Motor neuron (in vitro differentiated cells): ENCODE measurements at regions of chr18 and their contacts with region 1.

Region 1: DNA sequence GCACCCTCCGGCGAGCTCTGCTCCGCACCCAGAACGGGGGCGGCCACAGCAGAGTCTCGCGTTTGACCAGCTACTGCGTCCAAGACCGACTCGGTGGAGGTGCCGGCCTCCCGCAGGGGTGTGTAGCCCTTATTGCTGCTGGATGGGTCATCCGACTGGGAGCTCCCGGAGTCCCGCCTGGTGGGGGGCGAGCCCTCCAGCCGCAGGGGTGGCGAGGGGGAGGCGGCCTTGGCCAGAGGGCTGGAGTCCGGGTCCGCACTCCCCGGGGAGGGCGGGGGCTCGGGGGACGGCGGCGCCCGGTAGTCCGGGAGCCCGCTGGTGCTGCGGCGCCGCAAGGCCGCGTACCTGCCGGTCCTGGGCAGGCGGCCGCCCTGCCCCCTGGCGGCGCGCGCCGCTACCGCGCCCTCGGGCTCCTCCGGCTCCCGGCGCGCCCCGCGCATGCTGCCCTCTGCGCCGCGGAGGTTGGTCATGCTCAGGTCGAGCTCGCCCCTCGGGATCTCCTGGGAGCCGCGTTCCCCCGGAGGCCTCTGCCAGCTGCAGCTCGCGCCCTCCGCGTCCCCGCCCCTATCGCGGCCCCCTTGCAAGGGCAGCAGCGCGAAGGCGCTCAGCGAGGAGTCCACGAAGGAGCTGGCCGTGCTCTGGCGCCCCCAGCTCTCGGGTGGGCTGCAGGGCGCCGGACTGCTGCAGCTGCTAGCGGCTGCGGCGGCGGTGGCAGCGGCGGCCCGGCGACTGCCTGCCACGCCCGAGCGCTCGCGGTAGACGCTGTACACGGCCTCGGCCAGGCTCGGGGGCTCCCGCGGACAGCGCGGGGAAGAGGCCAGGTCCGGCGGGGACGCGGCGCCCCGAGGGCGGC is 4.8 kb downstream of the TMEM200C start:
- ATAC-seq: peak in 7 of 8 experiments; percentile 5 to 64 (median 34)
- H3K4me3 ChIP-seq: peak overlapping the region in 2 of 5 donors; percentile 11 to 20
- H3K27ac ChIP-seq: no peak overlapping the region
- H3K4me1 ChIP-seq: peaks cover 14 to 15% of the 10 kb centered on the region in 2 donors

Region 2: GRCh38 chr18:5527603-5528002 is 363.0 kb before region 1 on chr18:
- in situ Hi-C with region 1: no loop called
- ATAC-seq: peak in 2 of 8 experiments; percentile 44 to 76
- H3K4me3 ChIP-seq: no peak overlapping the region
- H3K27ac ChIP-seq: no peak overlapping the region
- H3K4me1 ChIP-seq: peaks cover 4 to 10% of the 10 kb centered on the region in 2 donors

Region 3: DNA sequence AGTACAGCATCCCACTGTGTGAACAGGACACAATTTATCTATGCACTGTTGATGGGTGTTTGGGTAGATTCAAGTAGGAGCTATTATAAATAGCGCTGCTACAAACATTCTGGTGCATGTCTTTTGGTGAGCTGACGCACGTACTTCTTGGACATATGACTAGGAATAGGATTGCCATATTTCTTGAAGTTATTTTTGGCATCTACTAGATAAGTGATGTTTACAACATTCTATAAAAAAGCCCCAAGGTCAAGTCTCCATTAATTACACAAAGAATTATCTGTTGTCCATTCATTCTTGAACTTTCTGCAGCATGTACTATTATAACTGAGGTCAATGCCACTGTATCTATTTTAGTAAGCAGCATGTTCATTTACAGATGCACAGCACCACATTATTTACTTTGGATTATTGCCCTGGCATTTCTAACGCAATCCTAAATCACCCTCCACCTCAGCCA is 230.3 kb after region 1 on chr18:
- in situ Hi-C with region 1: loop called in 1 of 9 experiments (anchors 25 kb)
- ATAC-seq: peak in 1 of 8 experiments; percentile 52
- H3K4me3 ChIP-seq: no peak overlapping the region
- H3K27ac ChIP-seq: no peak overlapping the region
- H3K4me1 ChIP-seq: no peaks in the 10 kb centered on the region

Region 4: DNA sequence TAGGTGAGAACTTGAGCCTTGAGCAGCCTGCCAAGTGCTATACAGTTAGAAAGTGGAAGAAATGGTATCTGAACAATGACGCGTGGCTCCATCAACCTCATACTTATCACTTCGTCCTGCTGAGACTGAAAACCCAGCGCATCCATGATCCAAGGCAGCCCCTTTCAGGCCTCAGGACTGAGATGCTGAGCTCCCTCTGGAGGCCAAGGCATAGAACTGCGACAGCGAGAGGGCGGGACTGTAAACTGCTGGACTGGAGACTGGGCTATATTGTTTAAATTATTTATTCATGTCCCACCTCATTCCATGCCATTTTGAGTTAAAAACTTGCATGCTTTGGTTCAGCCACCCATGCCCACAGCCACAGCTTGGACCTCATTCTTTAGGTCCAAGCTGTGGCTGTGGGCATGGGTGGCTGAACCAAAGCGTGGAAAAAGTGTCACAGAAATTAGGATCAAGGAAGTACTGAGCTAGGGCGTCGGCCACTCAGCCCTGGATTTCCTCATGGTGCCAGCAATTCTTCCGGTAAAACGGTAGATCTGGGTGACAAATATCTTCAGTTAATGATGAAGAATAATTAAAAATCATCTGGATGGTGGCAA is 328.7 kb after region 1 on chr18:
- in situ Hi-C with region 1: loop called in 1 of 9 experiments (anchors 25 kb)
- ATAC-seq: peak; percentile 61 to 93 (median 81)
- H3K4me3 ChIP-seq: no peak overlapping the region
- H3K27ac ChIP-seq: no peak overlapping the region
- H3K4me1 ChIP-seq: no peaks in the 10 kb centered on the region

Region 5: GRCh38 chr18:6482198-6482977 is 591.8 kb after region 1 on chr18:
- in situ Hi-C with region 1: loop called in 2 of 9 experiments (anchors 25 kb)
- ATAC-seq: peak; percentile 38 to 98 (median 77)
- H3K4me3 ChIP-seq: no peak overlapping the region
- H3K27ac ChIP-seq: no peak overlapping the region
- H3K4me1 ChIP-seq: no peaks in the 10 kb centered on the region

Region 6: GRCh38 chr18:6521795-6522418 is 631.4 kb after region 1 on chr18:
- in situ Hi-C with region 1: loop called in 1 of 9 experiments (anchors 25 kb)
- ATAC-seq: peak in 3 of 8 experiments; percentile 45 to 69 (median 55)
- H3K4me3 ChIP-seq: no peak overlapping the region
- H3K27ac ChIP-seq: no peak overlapping the region
- H3K4me1 ChIP-seq: no peaks in the 10 kb centered on the region